ENCODE measurements at regions of chr17 and their contacts with region 1.

Region 1: DNA sequence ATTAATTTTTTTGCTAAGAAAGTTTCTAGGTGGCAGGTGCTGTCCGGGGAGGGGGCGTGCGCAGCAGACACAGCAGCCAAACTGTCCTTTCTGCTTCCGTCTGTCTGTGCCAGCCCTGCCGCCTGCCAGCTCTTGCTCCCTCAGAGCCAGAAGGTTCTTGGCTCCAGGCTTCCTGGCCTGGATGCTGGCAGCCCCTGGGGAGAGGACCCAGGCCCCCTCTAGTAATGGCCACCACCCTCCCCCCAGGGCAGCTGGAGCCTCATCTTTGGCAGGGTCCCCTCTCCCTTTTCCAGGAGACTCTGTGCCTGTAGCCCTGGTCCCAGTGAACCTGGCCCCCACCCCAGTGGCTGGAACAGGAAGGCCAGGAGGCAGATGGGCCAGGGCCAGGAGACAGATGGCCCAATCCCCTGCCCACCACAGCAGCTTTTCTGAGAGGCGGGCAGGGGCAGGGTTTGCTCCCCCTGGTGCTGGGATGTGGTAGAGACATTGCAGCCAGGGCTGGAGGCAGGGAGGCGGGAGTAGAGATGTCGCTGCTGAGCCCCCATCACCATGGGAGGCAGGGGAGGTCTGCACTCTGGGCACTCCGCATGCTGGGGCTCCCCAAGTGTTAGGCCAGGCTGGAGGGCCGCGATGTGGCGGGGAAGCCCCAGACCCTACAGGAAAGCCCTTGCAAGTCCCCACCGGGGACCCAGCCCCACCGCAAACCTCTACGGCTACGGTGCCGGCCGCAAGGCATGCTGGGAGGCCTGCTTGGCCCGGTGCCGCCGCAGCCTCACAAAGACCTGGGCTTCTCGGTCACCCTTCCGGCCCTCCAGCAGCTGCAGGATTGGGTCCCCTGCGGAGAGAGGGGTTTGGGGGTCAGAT is 16.7 kb downstream of the UNC13D start:
- DNase-seq: peak in 8 of 9 experiments; percentile 46 to 85 (median 72)
- ATAC-seq: peak; percentile 66
- H3K4me3 ChIP-seq: peak overlapping the region; percentile 33 to 39
- H3K4me3 Mint-ChIP-seq: peak overlapping the region; percentile 55
- H3K27ac ChIP-seq: peak overlapping the region; percentile 50 to 78
- H3K27ac Mint-ChIP-seq: peak overlapping the region; percentile 88
- H3K4me1 ChIP-seq: peaks cover 31% of the 10 kb centered on the region
- H3K4me1 Mint-ChIP-seq: peaks cover 21% of the 10 kb centered on the region
- H3K27me3 ChIP-seq: no peaks in the 10 kb centered on the region
- H3K27me3 Mint-ChIP-seq: no peaks in the 10 kb centered on the region
- CTCF ChIP-seq: peak; percentile 65

Region 2: DNA sequence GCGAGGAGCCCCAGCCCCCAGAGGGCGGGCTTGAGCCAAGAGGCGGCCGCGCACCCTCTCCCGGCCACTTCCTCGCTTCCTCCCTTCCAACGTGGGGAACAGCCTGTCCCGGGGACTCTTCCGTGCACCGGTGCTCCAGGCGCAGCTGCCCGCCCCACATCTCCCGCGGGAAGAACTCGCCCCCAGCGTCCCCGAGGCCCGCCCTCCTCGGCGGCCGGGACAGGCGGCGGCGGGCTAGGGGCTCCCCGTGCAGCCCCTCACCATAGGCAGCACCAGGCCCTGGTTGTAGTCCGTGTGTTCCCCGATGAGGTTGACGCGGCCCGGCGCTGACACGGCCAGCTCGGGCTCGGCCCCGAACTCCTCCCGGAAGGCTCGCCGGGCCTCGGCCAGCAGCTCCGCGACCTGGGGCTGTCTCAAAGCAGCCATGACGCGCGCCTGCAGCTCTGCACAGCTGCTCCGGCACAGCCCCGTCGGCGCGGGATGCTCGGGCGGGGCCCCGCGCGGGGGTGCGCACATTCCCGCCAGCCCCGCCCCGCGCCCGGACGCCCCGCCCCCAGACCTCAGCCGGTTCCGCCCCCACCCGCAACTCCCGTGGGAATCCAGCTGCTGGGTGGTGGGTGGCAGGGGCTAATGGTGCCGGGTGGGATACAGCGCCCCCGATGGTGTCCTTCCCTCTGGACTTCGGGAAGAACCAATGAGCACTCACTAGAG is 62.6 kb before region 1 on chr17 and contains the start of gene GALK1:
- CTCF ChIA-PET with region 1: interaction called, 38 read pairs
- POLR2A ChIA-PET with region 1: interaction called, 8 read pairs
- intact Hi-C with region 1: loop called (anchors 2 kb)
- DNase-seq: peak; percentile 46 to 89 (median 70)
- ATAC-seq: peak; percentile 94
- H3K4me3 ChIP-seq: peak within 1 kb of the TSS; percentile 62 to 86
- H3K4me3 Mint-ChIP-seq: peak within 1 kb of the TSS; percentile 74
- H3K27ac ChIP-seq: peak within 1 kb of the TSS; percentile 51 to 63
- H3K27ac Mint-ChIP-seq: peak within 1 kb of the TSS; percentile 55
- H3K4me1 ChIP-seq: peaks cover 16% of the 10 kb centered on the region
- H3K4me1 Mint-ChIP-seq: peaks cover 8% of the 10 kb centered on the region
- H3K27me3 ChIP-seq: no peaks in the 10 kb centered on the region
- H3K27me3 Mint-ChIP-seq: no peaks in the 10 kb centered on the region
- CTCF ChIP-seq: peak; percentile 40
- total RNA-seq, gene GALK1: 3.4 to 3.7 TPM

Region 3: GRCh38 chr17:75784473-75785015 is 42.9 kb before region 1 on chr17 and contains the start of gene UNK:
- CTCF ChIA-PET with region 1: interaction called, 24 read pairs
- POLR2A ChIA-PET with region 1: interaction called, 36 read pairs
- intact Hi-C with region 1: loop called (anchors 2 kb)
- DNase-seq: peak; percentile 91 to 99 (median 96)
- ATAC-seq: peak; percentile 64
- H3K4me3 ChIP-seq: peak within 1 kb of the TSS; percentile 57 to 78
- H3K4me3 Mint-ChIP-seq: peak within 1 kb of the TSS; percentile 93
- H3K27ac ChIP-seq: peak within 1 kb of the TSS; percentile 95 to 100
- H3K27ac Mint-ChIP-seq: peak within 1 kb of the TSS; percentile 98
- H3K4me1 ChIP-seq: peaks cover 39% of the 10 kb centered on the region
- H3K4me1 Mint-ChIP-seq: peaks cover 49% of the 10 kb centered on the region
- H3K27me3 ChIP-seq: no peaks in the 10 kb centered on the region
- H3K27me3 Mint-ChIP-seq: no peaks in the 10 kb centered on the region
- CTCF ChIP-seq: no peak
- total RNA-seq, gene UNK: 37.3 to 42.8 TPM

Region 4: GRCh38 chr17:75795820-75796607 is 31.5 kb before region 1 on chr17:
- CTCF ChIA-PET with region 1: interaction called, 18 read pairs
- POLR2A ChIA-PET with region 1: interaction called, 4 read pairs
- intact Hi-C with region 1: no loop called
- DNase-seq: no peak
- ATAC-seq: no peak
- H3K4me3 ChIP-seq: no peak overlapping the region
- H3K4me3 Mint-ChIP-seq: no peak overlapping the region
- H3K27ac ChIP-seq: no peak overlapping the region
- H3K27ac Mint-ChIP-seq: no peak overlapping the region
- H3K4me1 ChIP-seq: no peaks in the 10 kb centered on the region
- H3K4me1 Mint-ChIP-seq: peaks cover 31% of the 10 kb centered on the region
- H3K27me3 ChIP-seq: no peaks in the 10 kb centered on the region
- H3K27me3 Mint-ChIP-seq: no peaks in the 10 kb centered on the region
- CTCF ChIP-seq: no peak

Region 5: GRCh38 chr17:76063875-76064546 is 236.5 kb after region 1 on chr17:
- CTCF ChIA-PET with region 1: no interaction called
- POLR2A ChIA-PET with region 1: no interaction called
- intact Hi-C with region 1: no loop called
- DNase-seq: peak in 2 of 9 experiments; percentile 33 to 50
- ATAC-seq: peak; percentile 55
- H3K4me3 ChIP-seq: no peak overlapping the region
- H3K4me3 Mint-ChIP-seq: peak overlapping the region; percentile 35
- H3K27ac ChIP-seq: peak overlapping the region in 1 of 2 experiments; percentile 46
- H3K27ac Mint-ChIP-seq: peak overlapping the region; percentile 81
- H3K4me1 ChIP-seq: no peaks in the 10 kb centered on the region
- H3K4me1 Mint-ChIP-seq: peaks cover 14% of the 10 kb centered on the region
- H3K27me3 ChIP-seq: no peaks in the 10 kb centered on the region
- H3K27me3 Mint-ChIP-seq: no peaks in the 10 kb centered on the region
- CTCF ChIP-seq: no peak